ENCODE measurements at regions of chr6 and their contacts with region 1.

Region 1: DNA sequence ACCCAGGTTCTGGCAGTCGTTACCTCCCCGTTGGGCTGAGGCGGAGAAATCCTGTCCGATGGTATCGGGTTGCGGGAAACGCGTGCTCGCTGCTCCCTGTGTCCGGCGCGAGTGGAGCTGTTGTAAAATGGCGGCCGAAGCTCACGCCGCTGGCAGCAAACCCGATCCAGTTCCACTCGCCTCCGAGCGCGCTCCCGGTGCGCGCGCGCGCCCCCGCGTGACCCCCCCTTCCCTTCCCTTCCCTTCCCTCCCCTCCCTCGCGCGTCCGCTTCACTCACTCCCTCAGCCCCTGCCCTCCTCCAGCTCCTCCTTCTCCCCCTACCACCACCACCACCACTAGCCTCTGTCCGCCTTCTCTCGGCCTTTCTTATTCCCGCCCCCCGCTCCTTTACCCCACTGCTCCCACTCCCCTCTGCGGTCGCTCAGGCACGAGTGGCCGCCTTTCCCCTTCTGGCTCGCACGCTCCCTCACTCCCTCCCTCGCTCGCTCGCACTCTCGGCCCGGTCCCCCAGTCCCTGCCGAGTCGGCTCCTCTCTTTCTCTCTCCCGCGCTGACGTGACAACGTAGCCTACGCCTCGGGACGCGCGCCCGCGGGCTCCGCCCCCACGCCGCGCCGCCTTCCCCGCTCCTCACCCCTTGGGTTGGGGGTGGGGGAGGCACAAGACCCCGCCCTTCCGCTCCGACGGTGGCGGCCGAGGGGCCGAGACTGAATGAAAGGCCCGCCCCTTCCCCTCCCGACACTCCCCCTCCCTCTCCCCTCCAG is at the start of gene SYNCRIP:
- DNase-seq: peak; percentile 99
- H3K4me3 Mint-ChIP-seq: peak within 1 kb of the TSS; percentile 87
- H3K27ac Mint-ChIP-seq: peak within 1 kb of the TSS; percentile 99
- H3K4me1 Mint-ChIP-seq: peaks cover 38% of the 10 kb centered on the region
- H3K27me3 Mint-ChIP-seq: no peaks in the 10 kb centered on the region
- CTCF ChIP-seq: no peak
- total RNA-seq, gene SYNCRIP: 126 and 161 TPM in 2 replicates

Region 2: DNA sequence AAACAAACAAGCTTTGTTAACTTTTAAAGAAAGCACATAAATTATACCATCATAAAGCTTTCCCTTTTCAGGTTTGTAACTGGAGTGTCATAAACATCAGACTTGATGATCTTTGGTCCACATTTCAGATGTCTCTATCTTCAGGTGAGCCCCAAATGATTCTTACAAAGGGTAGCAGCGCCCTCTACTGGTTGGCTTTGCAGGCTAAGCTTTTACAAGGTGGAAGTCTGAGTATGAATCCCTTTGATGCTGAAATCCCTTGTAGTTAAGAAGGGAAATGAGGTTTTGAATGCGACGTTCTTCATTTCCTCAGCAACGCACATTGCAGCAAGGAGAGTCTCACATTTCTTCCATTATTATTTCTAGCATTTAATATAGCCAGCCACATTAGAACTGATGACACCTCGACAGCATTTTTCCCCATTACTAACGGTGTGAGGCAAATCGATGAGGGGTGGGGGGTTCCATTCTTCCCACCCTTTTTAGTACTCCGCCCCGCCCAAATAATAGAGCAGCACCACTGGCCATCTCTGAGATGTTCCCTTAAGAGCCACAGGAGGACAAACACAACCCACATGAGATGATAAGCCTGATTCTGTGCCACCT is 319.4 kb before region 1 on chr6:
- CTCF ChIA-PET with region 1: no interaction called
- POLR2A ChIA-PET with region 1: no interaction called
- intact Hi-C with region 1: no loop called
- DNase-seq: peak; percentile 89
- H3K4me3 Mint-ChIP-seq: no peak overlapping the region
- H3K27ac Mint-ChIP-seq: no peak overlapping the region
- H3K4me1 Mint-ChIP-seq: no peaks in the 10 kb centered on the region
- H3K27me3 Mint-ChIP-seq: no peaks in the 10 kb centered on the region
- CTCF ChIP-seq: peak; percentile 85

Region 3: GRCh38 chr6:85498596-85499258 is 144.2 kb before region 1 on chr6:
- CTCF ChIA-PET with region 1: no interaction called
- POLR2A ChIA-PET with region 1: no interaction called
- intact Hi-C with region 1: no loop called
- DNase-seq: peak; percentile 97
- H3K4me3 Mint-ChIP-seq: no peak overlapping the region
- H3K27ac Mint-ChIP-seq: no peak overlapping the region
- H3K4me1 Mint-ChIP-seq: peaks cover 32% of the 10 kb centered on the region
- H3K27me3 Mint-ChIP-seq: no peaks in the 10 kb centered on the region
- CTCF ChIP-seq: no peak

Region 4: DNA sequence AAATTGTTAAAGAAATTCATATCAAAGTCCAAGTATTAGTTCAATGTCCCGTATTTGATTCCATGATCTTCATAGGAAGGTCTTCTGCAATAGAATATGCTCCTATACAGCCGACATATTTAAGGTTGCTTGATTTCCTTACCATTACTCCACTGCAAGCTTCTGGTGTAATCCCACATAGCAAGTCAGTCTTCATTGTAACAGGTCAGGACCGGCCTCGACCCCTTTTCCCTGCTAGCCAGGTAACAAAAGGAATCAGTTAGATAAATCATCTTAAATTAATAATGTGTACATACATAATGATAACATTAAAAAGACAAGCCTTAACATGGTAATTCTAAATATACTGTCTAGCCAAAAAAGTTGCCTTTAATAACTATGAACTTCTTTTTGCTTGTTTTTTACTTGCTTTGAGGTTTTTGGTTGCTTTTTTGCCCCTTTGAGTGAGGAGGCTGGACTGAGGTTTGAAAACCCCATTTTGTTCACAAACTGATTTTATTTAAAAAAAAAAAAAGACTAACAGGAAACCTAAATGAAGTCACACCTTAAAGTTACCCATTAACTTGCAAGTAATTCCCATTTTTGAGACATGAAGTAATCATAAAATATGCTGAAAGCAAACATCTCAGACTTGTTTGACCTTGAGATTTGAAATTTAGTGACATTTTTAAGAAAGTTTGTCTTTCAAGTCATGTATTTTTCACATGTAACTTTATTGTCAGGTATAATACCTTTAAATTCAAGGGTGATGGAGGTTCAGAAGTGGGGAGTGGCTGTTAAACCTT is 30.1 kb before region 1 on chr6:
- CTCF ChIA-PET with region 1: no interaction called
- POLR2A ChIA-PET with region 1: interaction called, 12 read pairs
- intact Hi-C with region 1: no loop called
- DNase-seq: no peak
- H3K4me3 Mint-ChIP-seq: no peak overlapping the region
- H3K27ac Mint-ChIP-seq: no peak overlapping the region
- H3K4me1 Mint-ChIP-seq: no peaks in the 10 kb centered on the region
- H3K27me3 Mint-ChIP-seq: no peaks in the 10 kb centered on the region
- CTCF ChIP-seq: no peak

Region 5: GRCh38 chr6:85628353-85628752 is 14.6 kb before region 1 on chr6:
- CTCF ChIA-PET with region 1: interaction called, 11 read pairs
- POLR2A ChIA-PET with region 1: interaction called, 16 read pairs
- intact Hi-C with region 1: no loop called
- DNase-seq: no peak
- H3K4me3 Mint-ChIP-seq: no peak overlapping the region
- H3K27ac Mint-ChIP-seq: no peak overlapping the region
- H3K4me1 Mint-ChIP-seq: peaks cover 28% of the 10 kb centered on the region
- H3K27me3 Mint-ChIP-seq: no peaks in the 10 kb centered on the region
- CTCF ChIP-seq: no peak

Region 6: GRCh38 chr6:85660181-85660611 is 17.2 kb after region 1 on chr6:
- CTCF ChIA-PET with region 1: interaction called, 6 read pairs
- POLR2A ChIA-PET with region 1: interaction called, 31 read pairs
- intact Hi-C with region 1: no loop called
- DNase-seq: peak; percentile 81
- H3K4me3 Mint-ChIP-seq: no peak overlapping the region
- H3K27ac Mint-ChIP-seq: peak overlapping the region; percentile 13
- H3K4me1 Mint-ChIP-seq: peaks cover 6% of the 10 kb centered on the region
- H3K27me3 Mint-ChIP-seq: no peaks in the 10 kb centered on the region
- CTCF ChIP-seq: no peak

Region 7: GRCh38 chr6:85691478-85691877 is 48.5 kb after region 1 on chr6:
- CTCF ChIA-PET with region 1: no interaction called
- POLR2A ChIA-PET with region 1: no interaction called
- intact Hi-C with region 1: no loop called
- DNase-seq: no peak
- H3K4me3 Mint-ChIP-seq: no peak overlapping the region
- H3K27ac Mint-ChIP-seq: no peak overlapping the region
- H3K4me1 Mint-ChIP-seq: no peaks in the 10 kb centered on the region
- H3K27me3 Mint-ChIP-seq: no peaks in the 10 kb centered on the region
- CTCF ChIP-seq: no peak